Activated CD4-positive, alpha-beta T cell treated with anti-CD3 and anti-CD28 coated beads, Interleukin-2, amount 10 ng/mL, durations not matched to agents 24 days and 14 days (primary cell): ENCODE measurements at regions of chr5 and their contacts with region 1.

Region 1: GRCh38 chr5:154072414-154073171 is 33.8 kb downstream of the MFAP3 start:
- DNase-seq: peak; percentile 96
- H3K4me3 Mint-ChIP-seq: peak overlapping the region; percentile 51
- H3K27ac Mint-ChIP-seq: peak overlapping the region; percentile 52
- H3K4me1 Mint-ChIP-seq: peaks cover 44% of the 10 kb centered on the region
- H3K27me3 Mint-ChIP-seq: peaks cover 5% of the 10 kb centered on the region

Region 2: GRCh38 chr5:153974131-153974812 is 98.3 kb before region 1 on chr5:
- intact Hi-C with region 1: loop called (anchors 10 kb)
- DNase-seq: peak; percentile 83
- H3K4me3 Mint-ChIP-seq: no peak overlapping the region
- H3K27ac Mint-ChIP-seq: no peak overlapping the region
- H3K4me1 Mint-ChIP-seq: no peaks in the 10 kb centered on the region
- H3K27me3 Mint-ChIP-seq: peaks cover 20% of the 10 kb centered on the region

Region 3: GRCh38 chr5:154179846-154180710 is 107.5 kb after region 1 on chr5:
- intact Hi-C with region 1: loop called (anchors 1 kb)
- DNase-seq: peak; percentile 83
- H3K4me3 Mint-ChIP-seq: no peak overlapping the region
- H3K27ac Mint-ChIP-seq: no peak overlapping the region
- H3K4me1 Mint-ChIP-seq: peaks cover 18% of the 10 kb centered on the region
- H3K27me3 Mint-ChIP-seq: peaks cover 10% of the 10 kb centered on the region

Region 4: DNA sequence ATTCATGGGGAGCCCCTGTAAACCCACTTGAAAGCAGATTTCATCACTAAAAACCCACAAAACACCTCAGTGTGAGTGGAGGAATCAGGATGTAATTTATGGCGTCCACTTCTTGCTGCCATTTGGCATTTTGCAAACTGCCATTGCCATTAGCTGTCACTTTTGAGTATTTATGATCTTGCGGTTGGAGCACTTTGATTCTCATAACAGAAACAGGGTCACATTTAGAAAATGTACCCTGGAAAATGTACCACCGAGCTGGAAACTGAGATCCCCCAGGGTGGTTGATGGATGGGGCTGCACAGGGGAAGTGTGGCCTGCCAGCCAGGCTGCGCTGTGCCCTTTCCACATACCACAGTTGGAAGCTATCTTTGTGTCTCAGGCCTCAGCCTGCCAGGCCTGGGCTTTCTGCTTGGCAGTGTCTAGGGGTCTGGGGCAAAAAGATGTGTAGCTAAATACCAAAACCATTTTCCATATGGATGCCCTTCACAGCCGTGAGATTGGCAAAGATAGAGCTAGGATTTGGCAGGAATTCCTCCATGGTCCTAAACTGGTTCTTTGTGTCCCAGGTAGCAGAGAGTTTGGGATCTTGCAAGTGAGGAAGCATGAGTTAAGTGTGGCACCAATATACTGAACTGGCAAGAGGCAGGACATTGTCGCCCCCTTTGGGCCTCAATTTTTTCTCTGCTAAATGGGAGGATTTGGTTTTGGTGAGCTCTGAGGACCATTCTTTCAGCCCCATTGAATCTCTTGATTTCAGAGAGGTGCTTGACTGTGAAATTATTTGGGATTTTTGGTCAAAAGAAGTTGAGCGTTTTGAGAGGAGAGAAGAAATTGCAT is 164.2 kb after region 1 on chr5:
- intact Hi-C with region 1: loop called (anchors 1 kb)
- DNase-seq: peak; percentile 77
- H3K4me3 Mint-ChIP-seq: no peak overlapping the region
- H3K27ac Mint-ChIP-seq: peak overlapping the region; percentile 4
- H3K4me1 Mint-ChIP-seq: peaks cover 54% of the 10 kb centered on the region
- H3K27me3 Mint-ChIP-seq: no peaks in the 10 kb centered on the region

Region 5: GRCh38 chr5:154445422-154446182 is 373.0 kb after region 1 on chr5 and contains the start of gene SAP30L:
- intact Hi-C with region 1: loop called (anchors 1 kb)
- DNase-seq: peak; percentile 99
- H3K4me3 Mint-ChIP-seq: peak within 1 kb of the TSS; percentile 99
- H3K27ac Mint-ChIP-seq: peak within 1 kb of the TSS; percentile 96
- H3K4me1 Mint-ChIP-seq: peaks cover 42% of the 10 kb centered on the region
- H3K27me3 Mint-ChIP-seq: no peaks in the 10 kb centered on the region
- total RNA-seq, gene SAP30L: 31.4 and 37.7 TPM in 2 replicates

Region 6: GRCh38 chr5:154610321-154611154 is 537.9 kb after region 1 on chr5:
- intact Hi-C with region 1: loop called (anchors 10 kb)
- DNase-seq: peak; percentile 89
- H3K4me3 Mint-ChIP-seq: peak overlapping the region; percentile 32
- H3K27ac Mint-ChIP-seq: no peak overlapping the region
- H3K4me1 Mint-ChIP-seq: peaks cover 3% of the 10 kb centered on the region
- H3K27me3 Mint-ChIP-seq: peaks cover 49% of the 10 kb centered on the region